GM12878 (cell line): ENCODE measurements at regions of chr1 and their contacts with region 1.

Region 1: DNA sequence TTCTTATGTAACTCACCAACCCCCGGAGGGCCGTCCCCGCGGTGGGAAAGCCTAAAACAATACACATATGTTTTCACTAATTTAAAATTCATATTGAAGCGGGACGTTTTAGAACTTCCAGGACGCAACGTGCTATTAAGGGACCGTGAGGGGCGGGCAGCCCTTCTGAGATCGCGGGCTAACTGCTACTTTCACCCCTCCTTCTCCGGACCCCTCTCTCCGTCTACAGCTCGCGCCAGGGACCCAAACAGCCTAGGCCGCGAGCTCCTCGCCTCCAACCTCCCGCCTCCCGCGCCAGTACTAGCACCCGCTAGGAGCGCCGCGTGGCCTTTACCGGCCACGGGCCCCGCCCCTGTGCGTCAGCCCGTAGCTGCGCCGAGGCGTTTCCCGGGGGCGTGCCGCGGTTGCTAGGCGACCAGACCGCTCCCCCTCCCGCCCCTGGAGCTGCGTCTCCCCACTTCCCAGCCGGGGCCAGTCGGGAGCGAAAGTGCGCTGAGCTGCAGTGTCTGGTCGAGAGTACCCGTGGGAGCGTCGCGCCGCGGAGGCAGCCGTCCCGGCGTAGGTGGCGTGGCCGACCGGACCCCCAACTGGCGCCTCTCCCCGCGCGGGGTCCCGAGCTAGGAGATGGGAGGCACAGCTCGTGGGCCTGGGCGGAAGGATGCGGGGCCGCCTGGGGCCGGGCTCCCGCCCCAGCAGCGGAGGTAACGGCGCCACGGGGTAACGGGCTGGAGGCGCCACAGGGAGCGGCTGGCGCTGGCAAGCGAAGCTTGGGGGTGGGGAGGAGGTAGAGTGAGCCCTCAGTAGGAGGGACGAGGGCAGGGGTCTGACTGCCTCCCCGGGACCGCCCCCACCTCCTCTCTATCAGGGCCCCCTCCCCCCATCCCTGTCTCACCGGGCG is at the start of gene DYRK3:
- DNase-seq: peak; percentile 71
- ATAC-seq: peak; percentile 92
- H3K4me3 ChIP-seq: peak within 1 kb of the TSS; percentile 94
- H3K27ac ChIP-seq: peak within 1 kb of the TSS; percentile 62
- H3K4me1 ChIP-seq: peaks cover 26% of the 10 kb centered on the region
- H3K27me3 ChIP-seq: no peaks in the 10 kb centered on the region
- CTCF ChIP-seq: 0 out of 6 replicates have a peak, but pooled peaks of 1 of the 3 experiments have one; percentile 5
- EP300 ChIP-seq: 0 out of 4 replicates have a peak, but pooled peaks of 1 of the 2 experiments have one; percentile 17
- POLR2A ChIP-seq: peak; percentile 94
- RAD21 ChIP-seq: no peak
- polyA plus RNA-seq, gene DYRK3: 1.6 to 2.8 TPM

Region 2: GRCh38 chr1:206489980-206490770 is 145.2 kb before region 1 on chr1:
- CTCF ChIA-PET with region 1: interaction called, 11 read pairs
- POLR2A ChIA-PET with region 1: no interaction called
- RAD21 ChIA-PET with region 1: interaction called, 3 read pairs
- SMC1A ChIA-PET with region 1: interaction called, 4 read pairs
- in situ Hi-C with region 1: no loop called
- intact Hi-C with region 1: no loop called
- DNase-seq: no peak
- ATAC-seq: peak; percentile 99
- H3K4me3 ChIP-seq: no peak overlapping the region
- H3K27ac ChIP-seq: no peak overlapping the region
- H3K4me1 ChIP-seq: peaks cover 5% of the 10 kb centered on the region
- H3K27me3 ChIP-seq: no peaks in the 10 kb centered on the region
- CTCF ChIP-seq: peak; percentile 91 to 97 (median 96)
- EP300 ChIP-seq: no peak
- POLR2A ChIP-seq: no peak
- RAD21 ChIP-seq: peak; percentile 97

Region 3: GRCh38 chr1:206658264-206658980 is 23.1 kb after region 1 on chr1:
- CTCF ChIA-PET with region 1: interaction called, 1,150 read pairs
- POLR2A ChIA-PET with region 1: interaction called, 92 read pairs
- RAD21 ChIA-PET with region 1: interaction called, 207 read pairs
- SMC1A ChIA-PET with region 1: interaction called, 301 read pairs
- in situ Hi-C with region 1: no loop called
- intact Hi-C with region 1: no loop called
- DNase-seq: no peak
- ATAC-seq: peak; percentile 93
- H3K4me3 ChIP-seq: no peak overlapping the region
- H3K27ac ChIP-seq: no peak overlapping the region
- H3K4me1 ChIP-seq: peaks cover 9% of the 10 kb centered on the region
- H3K27me3 ChIP-seq: no peaks in the 10 kb centered on the region
- CTCF ChIP-seq: peak; percentile 74 to 99 (median 98)
- EP300 ChIP-seq: no peak
- POLR2A ChIP-seq: no peak
- RAD21 ChIP-seq: peak; percentile 62

Region 4: DNA sequence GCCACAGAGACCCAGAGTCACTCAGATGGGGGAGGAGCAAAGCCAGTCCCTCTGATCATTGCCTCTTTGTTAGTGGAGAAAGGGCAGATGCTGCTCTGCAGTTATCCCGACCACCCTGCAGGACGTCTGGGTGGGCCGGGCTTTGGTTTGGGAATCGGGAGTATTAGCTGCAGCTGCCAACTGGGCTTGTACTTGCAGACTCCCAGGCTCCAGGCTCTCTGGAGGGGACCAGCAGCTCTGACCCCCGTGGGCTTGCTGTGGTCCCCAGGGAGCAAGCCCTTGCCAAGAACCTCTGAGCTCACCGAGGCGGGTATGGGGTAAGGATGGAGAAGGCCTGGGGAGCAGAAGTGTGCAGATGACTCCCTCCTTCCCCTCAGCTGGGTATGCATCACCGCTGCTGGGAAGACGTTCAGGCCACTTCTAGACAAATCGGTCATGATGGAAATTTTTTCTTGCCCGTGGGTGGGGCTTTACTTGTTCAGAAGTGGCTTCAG is 71.0 kb after region 1 on chr1:
- CTCF ChIA-PET with region 1: interaction called, 7 read pairs
- POLR2A ChIA-PET with region 1: interaction called, 8 read pairs
- RAD21 ChIA-PET with region 1: interaction called, 5 read pairs
- SMC1A ChIA-PET with region 1: interaction called, 10 read pairs
- in situ Hi-C with region 1: no loop called
- intact Hi-C with region 1: no loop called
- DNase-seq: no peak
- ATAC-seq: no peak
- H3K4me3 ChIP-seq: no peak overlapping the region
- H3K27ac ChIP-seq: no peak overlapping the region
- H3K4me1 ChIP-seq: peaks cover 60% of the 10 kb centered on the region
- H3K27me3 ChIP-seq: no peaks in the 10 kb centered on the region
- CTCF ChIP-seq: no peak
- EP300 ChIP-seq: no peak
- POLR2A ChIP-seq: no peak
- RAD21 ChIP-seq: no peak

Region 5: GRCh38 chr1:206725109-206725963 is 90.0 kb after region 1 on chr1:
- CTCF ChIA-PET with region 1: interaction called, 16 read pairs
- POLR2A ChIA-PET with region 1: interaction called, 6 read pairs
- RAD21 ChIA-PET with region 1: interaction called, 19 read pairs
- SMC1A ChIA-PET with region 1: interaction called, 13 read pairs
- in situ Hi-C with region 1: no loop called
- intact Hi-C with region 1: loop called (anchors 10 kb)
- DNase-seq: no peak
- ATAC-seq: peak; percentile 84
- H3K4me3 ChIP-seq: no peak overlapping the region
- H3K27ac ChIP-seq: 0 out of 2 replicates have a peak overlapping the region, but pooled peaks have one; percentile 34
- H3K4me1 ChIP-seq: peaks cover 29% of the 10 kb centered on the region
- H3K27me3 ChIP-seq: no peaks in the 10 kb centered on the region
- CTCF ChIP-seq: peak; percentile 59 to 78 (median 73)
- EP300 ChIP-seq: no peak
- POLR2A ChIP-seq: no peak
- RAD21 ChIP-seq: peak; percentile 53

Region 6: DNA sequence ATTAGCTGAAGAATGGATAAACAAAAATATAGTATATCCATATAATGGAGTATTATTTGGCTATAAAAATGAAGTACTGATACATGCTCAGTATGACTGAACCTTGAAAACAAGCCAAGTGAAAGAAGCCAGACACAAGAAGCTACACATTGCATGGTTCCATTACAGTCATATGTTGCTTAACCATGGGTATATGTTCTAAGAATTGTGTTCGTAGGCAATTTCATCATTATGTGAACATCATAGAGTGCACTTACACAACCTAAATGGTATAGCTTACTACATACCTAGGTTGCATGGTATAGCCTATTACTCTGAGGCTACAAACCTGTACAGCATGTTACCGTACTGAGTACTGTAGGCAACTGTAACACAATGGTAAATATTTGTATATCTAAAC is 363.5 kb after region 1 on chr1:
- CTCF ChIA-PET with region 1: no interaction called
- POLR2A ChIA-PET with region 1: no interaction called
- RAD21 ChIA-PET with region 1: no interaction called
- SMC1A ChIA-PET with region 1: no interaction called
- in situ Hi-C with region 1: no loop called
- intact Hi-C with region 1: no loop called
- DNase-seq: no peak
- ATAC-seq: no peak
- H3K4me3 ChIP-seq: no peak overlapping the region
- H3K27ac ChIP-seq: no peak overlapping the region
- H3K4me1 ChIP-seq: no peaks in the 10 kb centered on the region
- H3K27me3 ChIP-seq: peaks cover 0 to 5% of the 10 kb centered on the region in 2 experiments; a peak in 1 of 4 replicates
- CTCF ChIP-seq: no peak
- EP300 ChIP-seq: no peak
- POLR2A ChIP-seq: no peak
- RAD21 ChIP-seq: no peak